CD8-positive, alpha-beta T cell (primary cell): ENCODE measurements at regions of chr12 and their contacts with region 1.

Region 1: GRCh38 chr12:12736759-12737676 is 19.9 kb downstream of the CDKN1B start:
- DNase-seq: peak in 7 of 9 experiments; percentile 31 to 86 (median 62)
- ATAC-seq: peak; percentile 80
- H3K4me3 ChIP-seq: peak overlapping the region; percentile 47 to 51
- H3K4me3 Mint-ChIP-seq: peak overlapping the region; percentile 73
- H3K27ac ChIP-seq: peak overlapping the region; percentile 55 to 80
- H3K27ac Mint-ChIP-seq: peak overlapping the region; percentile 96
- H3K4me1 ChIP-seq: peaks cover 25% of the 10 kb centered on the region
- H3K4me1 Mint-ChIP-seq: peaks cover 35% of the 10 kb centered on the region
- H3K27me3 ChIP-seq: no peaks in the 10 kb centered on the region
- H3K27me3 Mint-ChIP-seq: no peaks in the 10 kb centered on the region
- CTCF ChIP-seq: peak; percentile 80

Region 2: GRCh38 chr12:11581179-11581755 is 1155.8 kb before region 1 on chr12:
- CTCF ChIA-PET with region 1: no interaction called
- POLR2A ChIA-PET with region 1: no interaction called
- intact Hi-C with region 1: loop called in 1 of 2 experiments (anchors 10 kb)
- DNase-seq: peak; percentile 16 to 81 (median 69)
- ATAC-seq: peak; percentile 26
- H3K4me3 ChIP-seq: no peak overlapping the region
- H3K4me3 Mint-ChIP-seq: no peak overlapping the region
- H3K27ac ChIP-seq: no peak overlapping the region
- H3K27ac Mint-ChIP-seq: no peak overlapping the region
- H3K4me1 ChIP-seq: peaks cover 3% of the 10 kb centered on the region
- H3K4me1 Mint-ChIP-seq: peaks cover 2% of the 10 kb centered on the region
- H3K27me3 ChIP-seq: peaks cover 0 to 5% of the 10 kb centered on the region in 2 experiments
- H3K27me3 Mint-ChIP-seq: peaks cover 2% of the 10 kb centered on the region
- CTCF ChIP-seq: peak; percentile 86

Region 3: GRCh38 chr12:12562585-12563261 is 174.3 kb before region 1 on chr12 and contains the start of gene DUSP16:
- CTCF ChIA-PET with region 1: interaction called, 10 read pairs
- POLR2A ChIA-PET with region 1: interaction called, 11 read pairs
- intact Hi-C with region 1: loop called in 1 of 2 experiments (anchors 1 kb)
- DNase-seq: peak; percentile 50 to 95 (median 75)
- ATAC-seq: peak; percentile 65
- H3K4me3 ChIP-seq: peak within 1 kb of the TSS; percentile 77 to 80
- H3K4me3 Mint-ChIP-seq: peak within 1 kb of the TSS; percentile 95
- H3K27ac ChIP-seq: peak within 1 kb of the TSS; percentile 92 to 96
- H3K27ac Mint-ChIP-seq: peak within 1 kb of the TSS; percentile 99
- H3K4me1 ChIP-seq: peaks cover 16% of the 10 kb centered on the region
- H3K4me1 Mint-ChIP-seq: peaks cover 43% of the 10 kb centered on the region
- H3K27me3 ChIP-seq: no peaks in the 10 kb centered on the region
- H3K27me3 Mint-ChIP-seq: no peaks in the 10 kb centered on the region
- CTCF ChIP-seq: no peak
- total RNA-seq, gene DUSP16: 27.9 to 34.1 TPM

Region 4: GRCh38 chr12:12645485-12645884 is 91.5 kb before region 1 on chr12:
- CTCF ChIA-PET with region 1: interaction called, 54 read pairs
- POLR2A ChIA-PET with region 1: interaction called, 6 read pairs
- intact Hi-C with region 1: loop called (anchors 1 kb)
- DNase-seq: peak in 8 of 9 experiments; percentile 9 to 79 (median 48)
- ATAC-seq: peak; percentile 97
- H3K4me3 ChIP-seq: no peak overlapping the region
- H3K4me3 Mint-ChIP-seq: no peak overlapping the region
- H3K27ac ChIP-seq: no peak overlapping the region
- H3K27ac Mint-ChIP-seq: peak overlapping the region; percentile 50
- H3K4me1 ChIP-seq: no peaks in the 10 kb centered on the region
- H3K4me1 Mint-ChIP-seq: peaks cover 5% of the 10 kb centered on the region
- H3K27me3 ChIP-seq: no peaks in the 10 kb centered on the region
- H3K27me3 Mint-ChIP-seq: no peaks in the 10 kb centered on the region
- CTCF ChIP-seq: peak; percentile 64

Region 5: DNA sequence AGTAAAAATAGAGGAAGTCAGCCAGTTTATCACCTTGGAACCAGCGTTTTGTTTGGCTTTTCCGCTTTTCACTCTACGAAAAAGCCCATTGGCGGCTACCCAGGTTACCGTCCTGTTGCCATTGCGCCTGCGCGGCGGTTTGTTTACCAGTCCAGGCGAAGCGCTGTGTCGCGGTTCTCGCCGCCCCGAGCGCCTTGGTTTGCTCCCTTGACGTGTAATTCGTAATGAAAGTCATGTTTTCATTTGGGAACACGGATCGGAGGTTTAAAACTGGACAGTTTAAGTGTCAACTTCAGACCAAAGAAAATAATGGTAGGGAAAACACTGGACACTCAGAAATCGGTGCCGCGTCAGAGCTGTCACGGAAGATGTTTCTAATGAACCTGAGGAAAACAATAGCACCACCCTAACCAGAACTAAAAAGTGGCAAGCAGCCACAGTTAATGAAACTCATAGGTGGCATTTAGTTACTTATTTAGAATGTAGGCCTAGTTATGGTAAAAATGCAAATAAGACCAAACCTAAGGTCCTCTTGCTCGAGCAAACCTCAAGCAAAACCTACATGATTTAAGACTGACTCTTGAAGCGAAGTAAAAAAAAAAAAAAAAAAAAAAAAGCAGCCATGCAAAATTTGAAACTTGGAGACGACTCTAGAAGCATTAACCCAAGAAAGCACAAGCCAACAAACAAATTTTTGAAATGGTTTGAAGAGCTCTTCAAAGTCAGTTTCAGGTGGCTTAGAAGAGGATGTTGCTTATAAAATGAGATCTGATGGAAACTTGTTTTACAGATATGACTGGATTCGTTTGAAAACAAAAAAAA is 40.2 kb before region 1 on chr12:
- CTCF ChIA-PET with region 1: interaction called, 19 read pairs
- POLR2A ChIA-PET with region 1: interaction called, 19 read pairs
- intact Hi-C with region 1: loop called (anchors 2 kb)
- DNase-seq: peak; percentile 87 to 96 (median 94)
- ATAC-seq: peak; percentile 84
- H3K4me3 ChIP-seq: peak overlapping the region; percentile 42 to 88
- H3K4me3 Mint-ChIP-seq: peak overlapping the region; percentile 93
- H3K27ac ChIP-seq: peak overlapping the region; percentile 96 to 100
- H3K27ac Mint-ChIP-seq: peak overlapping the region; percentile 100
- H3K4me1 ChIP-seq: peaks cover 20% of the 10 kb centered on the region
- H3K4me1 Mint-ChIP-seq: peaks cover 29% of the 10 kb centered on the region
- H3K27me3 ChIP-seq: no peaks in the 10 kb centered on the region
- H3K27me3 Mint-ChIP-seq: no peaks in the 10 kb centered on the region
- CTCF ChIP-seq: no peak

Region 6: DNA sequence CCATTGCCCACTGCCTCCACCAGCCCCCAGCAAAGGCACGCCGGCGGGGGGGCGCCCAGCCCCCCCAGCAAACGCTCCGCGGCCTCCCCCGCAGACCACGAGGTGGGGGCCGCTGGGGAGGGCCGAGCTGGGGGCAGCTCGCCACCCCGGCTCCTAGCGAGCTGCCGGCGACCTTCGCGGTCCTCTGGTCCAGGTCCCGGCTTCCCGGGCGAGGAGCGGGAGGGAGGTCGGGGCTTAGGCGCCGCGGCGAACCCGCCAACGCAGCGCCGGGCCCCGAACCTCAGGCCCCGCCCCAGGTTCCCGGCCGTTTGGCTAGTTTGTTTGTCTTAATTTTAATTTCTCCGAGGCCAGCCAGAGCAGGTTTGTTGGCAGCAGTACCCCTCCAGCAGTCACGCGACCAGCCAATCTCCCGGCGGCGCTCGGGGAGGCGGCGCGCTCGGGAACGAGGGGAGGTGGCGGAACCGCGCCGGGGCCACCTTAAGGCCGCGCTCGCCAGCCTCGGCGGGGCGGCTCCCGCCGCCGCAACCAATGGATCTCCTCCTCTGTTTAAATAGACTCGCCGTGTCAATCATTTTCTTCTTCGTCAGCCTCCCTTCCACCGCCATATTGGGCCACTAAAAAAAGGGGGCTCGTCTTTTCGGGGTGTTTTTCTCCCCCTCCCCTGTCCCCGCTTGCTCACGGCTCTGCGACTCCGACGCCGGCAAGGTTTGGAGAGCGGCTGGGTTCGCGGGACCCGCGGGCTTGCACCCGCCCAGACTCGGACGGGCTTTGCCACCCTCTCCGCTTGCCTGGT is 20.0 kb before region 1 on chr12 and contains the start of gene CDKN1B:
- CTCF ChIA-PET with region 1: interaction called, 34 read pairs
- POLR2A ChIA-PET with region 1: interaction called, 127 read pairs
- intact Hi-C with region 1: loop called (anchors 1 kb)
- DNase-seq: peak; percentile 76 to 93 (median 86)
- ATAC-seq: peak; percentile 62
- H3K4me3 ChIP-seq: peak within 1 kb of the TSS; percentile 95 to 96
- H3K4me3 Mint-ChIP-seq: peak within 1 kb of the TSS; percentile 98
- H3K27ac ChIP-seq: peak within 1 kb of the TSS; percentile 93 to 97
- H3K27ac Mint-ChIP-seq: peak within 1 kb of the TSS; percentile 98
- H3K4me1 ChIP-seq: peaks cover 47% of the 10 kb centered on the region
- H3K4me1 Mint-ChIP-seq: peaks cover 66% of the 10 kb centered on the region
- H3K27me3 ChIP-seq: no peaks in the 10 kb centered on the region
- H3K27me3 Mint-ChIP-seq: no peaks in the 10 kb centered on the region
- CTCF ChIP-seq: no peak
- total RNA-seq, gene CDKN1B: 240 to 245 TPM

Region 7: DNA sequence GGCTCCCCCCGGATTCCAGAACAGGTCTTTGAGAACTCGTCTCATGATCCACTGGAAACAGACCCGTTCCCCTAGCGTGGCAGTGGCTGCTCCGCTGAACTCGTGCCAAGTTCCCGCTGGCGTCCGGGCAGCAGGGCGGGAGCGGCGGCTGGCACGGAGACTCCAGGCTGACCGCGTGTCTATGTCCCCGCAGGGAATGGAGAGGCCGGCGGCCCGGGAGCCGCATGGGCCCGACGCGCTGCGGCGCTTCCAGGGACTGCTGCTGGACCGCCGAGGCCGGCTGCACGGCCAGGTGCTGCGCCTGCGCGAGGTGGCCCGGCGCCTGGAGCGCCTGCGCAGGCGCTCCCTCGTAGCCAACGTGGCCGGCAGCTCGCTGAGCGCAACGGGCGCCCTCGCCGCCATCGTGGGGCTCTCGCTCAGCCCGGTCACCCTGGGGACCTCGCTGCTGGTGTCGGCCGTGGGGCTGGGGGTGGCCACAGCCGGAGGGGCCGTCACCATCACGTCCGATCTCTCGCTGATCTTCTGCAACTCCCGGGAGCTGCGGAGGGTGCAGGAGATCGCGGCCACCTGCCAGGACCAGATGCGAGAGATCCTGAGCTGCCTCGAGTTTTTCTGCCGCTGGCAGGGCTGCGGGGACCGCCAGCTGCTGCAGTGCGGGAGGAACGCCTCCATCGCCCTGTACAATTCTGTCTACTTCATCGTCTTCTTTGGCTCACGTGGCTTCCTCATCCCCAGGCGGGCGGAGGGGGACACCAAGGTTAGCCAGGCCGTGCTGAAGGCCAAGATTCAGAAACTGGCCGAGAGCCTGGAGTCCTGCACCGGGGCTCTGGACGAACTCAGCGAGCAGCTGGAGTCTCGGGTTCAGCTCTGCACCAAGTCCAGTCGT is 49.9 kb after region 1 on chr12:
- CTCF ChIA-PET with region 1: interaction called, 17 read pairs
- POLR2A ChIA-PET with region 1: interaction called, 5 read pairs
- intact Hi-C with region 1: loop called in 1 of 2 experiments (anchors 5 kb)
- DNase-seq: peak; percentile 47 to 90 (median 71)
- ATAC-seq: peak; percentile 90
- H3K4me3 ChIP-seq: peak overlapping the region; percentile 68 to 70
- H3K4me3 Mint-ChIP-seq: peak overlapping the region; percentile 77
- H3K27ac ChIP-seq: peak overlapping the region; percentile 72 to 73
- H3K27ac Mint-ChIP-seq: peak overlapping the region; percentile 87
- H3K4me1 ChIP-seq: peaks cover 16% of the 10 kb centered on the region
- H3K4me1 Mint-ChIP-seq: peaks cover 22% of the 10 kb centered on the region
- H3K27me3 ChIP-seq: no peaks in the 10 kb centered on the region
- H3K27me3 Mint-ChIP-seq: no peaks in the 10 kb centered on the region
- CTCF ChIP-seq: no peak

Region 8: GRCh38 chr12:13100882-13101769 is 364.1 kb after region 1 on chr12:
- CTCF ChIA-PET with region 1: no interaction called
- POLR2A ChIA-PET with region 1: no interaction called
- intact Hi-C with region 1: no loop called
- DNase-seq: peak; percentile 86 to 97 (median 93)
- ATAC-seq: peak; percentile 87
- H3K4me3 ChIP-seq: peak overlapping the region; percentile 55 to 77
- H3K4me3 Mint-ChIP-seq: peak overlapping the region; percentile 81
- H3K27ac ChIP-seq: peak overlapping the region; percentile 83 to 95
- H3K27ac Mint-ChIP-seq: peak overlapping the region; percentile 89
- H3K4me1 ChIP-seq: peaks cover 27% of the 10 kb centered on the region
- H3K4me1 Mint-ChIP-seq: peaks cover 36% of the 10 kb centered on the region
- H3K27me3 ChIP-seq: no peaks in the 10 kb centered on the region
- H3K27me3 Mint-ChIP-seq: no peaks in the 10 kb centered on the region
- CTCF ChIP-seq: no peak

Region 9: DNA sequence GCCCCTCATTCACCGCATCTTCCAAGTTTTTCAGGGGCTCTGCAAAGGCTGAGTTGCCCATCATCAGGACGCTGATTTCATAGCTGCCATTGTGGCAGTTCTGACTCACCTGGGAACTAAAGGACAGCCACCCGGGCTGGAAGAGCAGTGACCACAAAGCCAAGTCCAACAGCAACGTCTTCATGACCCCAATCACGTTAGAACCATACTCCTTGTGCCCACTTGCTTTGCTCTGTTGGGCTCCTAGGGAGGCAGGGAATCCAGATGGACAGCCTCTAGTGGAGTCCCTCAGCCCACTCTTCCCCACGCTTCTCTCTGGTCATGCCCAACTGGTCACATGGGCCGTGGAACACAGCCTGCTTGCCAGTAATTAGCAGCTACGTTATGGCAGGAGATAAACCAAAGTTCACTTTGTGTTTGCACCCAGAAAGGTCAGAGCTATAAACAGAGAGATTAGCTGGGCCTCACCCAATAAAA is 1959.3 kb after region 1 on chr12 and contains the start of gene GUCY2C:
- CTCF ChIA-PET with region 1: no interaction called
- POLR2A ChIA-PET with region 1: no interaction called
- intact Hi-C with region 1: no loop called
- DNase-seq: no peak
- ATAC-seq: no peak
- H3K4me3 ChIP-seq: no peak within 1 kb of the TSS
- H3K4me3 Mint-ChIP-seq: no peak within 1 kb of the TSS
- H3K27ac ChIP-seq: no peak within 1 kb of the TSS
- H3K27ac Mint-ChIP-seq: no peak within 1 kb of the TSS
- H3K4me1 ChIP-seq: no peaks in the 10 kb centered on the region
- H3K4me1 Mint-ChIP-seq: no peaks in the 10 kb centered on the region
- H3K27me3 ChIP-seq: no peaks in the 10 kb centered on the region
- H3K27me3 Mint-ChIP-seq: peaks cover 15% of the 10 kb centered on the region
- CTCF ChIP-seq: no peak
- total RNA-seq, gene GUCY2C: not detected